H1 (cell line): ENCODE measurements at regions of chr17 and their contacts with region 1.

Region 1: DNA sequence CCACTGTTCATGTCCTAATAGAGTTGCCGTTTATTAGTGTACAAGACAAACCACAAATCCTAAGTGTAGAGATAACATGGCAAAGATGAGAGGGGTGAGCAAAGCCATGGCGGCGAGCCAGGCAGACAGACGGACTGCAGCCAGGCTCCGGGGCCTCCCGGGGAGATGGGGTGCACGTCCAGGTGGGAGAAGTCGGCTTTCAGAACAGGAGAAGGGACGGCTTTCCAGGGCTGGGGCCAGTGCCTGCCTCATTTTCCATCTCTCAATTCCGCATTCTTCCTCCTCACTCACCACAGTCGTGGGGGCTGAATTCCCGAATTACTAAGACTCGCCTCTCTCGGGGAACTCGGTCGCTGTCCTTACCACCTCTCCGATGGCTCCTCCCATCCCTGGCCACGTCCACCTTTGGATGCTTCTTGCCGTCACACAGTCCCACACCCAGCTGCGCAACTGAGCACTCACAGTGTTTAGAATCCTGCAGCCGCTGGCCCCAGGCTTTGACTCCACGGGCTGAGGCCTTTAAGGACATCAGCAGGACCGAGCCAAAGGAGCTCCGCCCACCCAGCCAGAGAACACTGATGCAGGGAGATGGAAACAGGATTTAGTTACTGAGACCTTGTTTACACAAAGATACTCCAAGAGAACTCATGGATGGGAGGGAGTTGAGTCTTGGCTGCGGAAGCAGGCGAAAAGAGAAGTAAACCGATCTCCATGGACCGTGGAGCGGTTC is 59.7 kb downstream of the RNF112 start:
- DNase-seq: peak in 1 of 2 experiments; percentile 63
- H3K4me3 ChIP-seq: no peak overlapping the region
- H3K27ac ChIP-seq: no peak overlapping the region
- H3K4me1 ChIP-seq: peaks cover 1 to 10% (median 6%) of the 10 kb centered on the region in 4 experiments; a peak in 6 of 7 replicates
- H3K27me3 ChIP-seq: no peaks in the 10 kb centered on the region
- CTCF ChIP-seq: no peak
- EP300 ChIP-seq: no peak
- POLR2A ChIP-seq: no peak
- RAD21 ChIP-seq: no peak

Region 2: GRCh38 chr17:19415311-19415710 is 55.4 kb before region 1 on chr17:
- CTCF ChIA-PET with region 1: no interaction called
- POLR2A ChIA-PET with region 1: no interaction called
- DNase-seq: no peak
- H3K4me3 ChIP-seq: no peak overlapping the region
- H3K27ac ChIP-seq: no peak overlapping the region
- H3K4me1 ChIP-seq: peaks cover 0 to 10% (median 6%) of the 10 kb centered on the region in 4 experiments; a peak in 4 of 7 replicates
- H3K27me3 ChIP-seq: peaks cover 0 to 6% (median under 1%) of the 10 kb centered on the region in 4 experiments; a peak in 2 of 7 replicates
- CTCF ChIP-seq: peak in 1 of 3 experiments; percentile 0; a peak in 1 of 4 replicates
- EP300 ChIP-seq: no peak
- POLR2A ChIP-seq: no peak
- RAD21 ChIP-seq: no peak

Region 3: DNA sequence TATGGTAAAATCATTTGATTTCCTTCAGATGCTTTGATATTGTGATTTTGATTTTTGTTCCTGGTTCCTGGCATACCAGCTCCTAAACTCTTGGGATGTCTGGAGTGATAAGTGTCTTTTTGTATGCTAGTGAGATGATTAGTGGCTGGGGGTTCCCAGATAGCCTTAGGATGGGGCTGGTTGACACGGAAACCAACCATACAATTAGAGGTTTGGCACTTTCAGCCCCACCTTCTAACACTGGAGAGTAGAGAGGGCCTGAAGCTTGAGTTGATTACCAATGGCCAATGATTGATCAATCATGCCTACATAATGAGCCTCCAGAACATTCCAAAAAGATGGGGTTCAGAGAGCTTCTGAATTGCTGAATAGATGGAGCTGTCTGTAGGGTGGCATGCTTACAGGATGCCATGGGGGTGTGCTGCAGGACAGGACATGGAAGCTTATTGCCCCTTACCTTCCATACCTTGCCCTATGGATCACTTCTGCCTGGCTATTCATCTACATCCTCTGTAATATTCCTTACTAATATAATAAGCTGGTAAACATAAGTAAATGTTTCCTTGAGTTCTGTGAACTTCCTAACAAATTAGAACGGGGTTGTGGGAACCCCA is 36.9 kb before region 1 on chr17:
- CTCF ChIA-PET with region 1: interaction called, 12 read pairs
- POLR2A ChIA-PET with region 1: interaction called, 3 read pairs
- DNase-seq: no peak
- H3K4me3 ChIP-seq: peak overlapping the region in 1 of 4 experiments; percentile 31; a peak in 2 of 8 replicates
- H3K27ac ChIP-seq: no peak overlapping the region
- H3K4me1 ChIP-seq: peaks cover 5 to 16% (median 11%) of the 10 kb centered on the region in 4 experiments
- H3K27me3 ChIP-seq: no peaks in the 10 kb centered on the region
- CTCF ChIP-seq: peak; percentile 56 to 66 (median 58)
- EP300 ChIP-seq: no peak
- POLR2A ChIP-seq: no peak
- RAD21 ChIP-seq: peak; percentile 79 to 83

Region 4: GRCh38 chr17:19482576-19482975 is 11.9 kb after region 1 on chr17:
- CTCF ChIA-PET with region 1: interaction called, 11 read pairs
- POLR2A ChIA-PET with region 1: interaction called, 3 read pairs
- DNase-seq: no peak
- H3K4me3 ChIP-seq: peak overlapping the region in 1 of 4 experiments; percentile 16; a peak in 1 of 8 replicates
- H3K27ac ChIP-seq: no peak overlapping the region
- H3K4me1 ChIP-seq: peaks cover 0 to 10% (median 5%) of the 10 kb centered on the region in 4 experiments; a peak in 5 of 7 replicates
- H3K27me3 ChIP-seq: no peaks in the 10 kb centered on the region
- CTCF ChIP-seq: no peak
- EP300 ChIP-seq: peak in 1 of 2 experiments; percentile 8; a peak in 1 of 3 replicates
- POLR2A ChIP-seq: no peak
- RAD21 ChIP-seq: no peak

Region 5: GRCh38 chr17:19523690-19524089 is 53.0 kb after region 1 on chr17:
- CTCF ChIA-PET with region 1: no interaction called
- POLR2A ChIA-PET with region 1: no interaction called
- DNase-seq: no peak
- H3K4me3 ChIP-seq: no peak overlapping the region
- H3K27ac ChIP-seq: no peak overlapping the region
- H3K4me1 ChIP-seq: no peaks in the 10 kb centered on the region
- H3K27me3 ChIP-seq: no peaks in the 10 kb centered on the region
- CTCF ChIP-seq: no peak
- EP300 ChIP-seq: no peak
- POLR2A ChIP-seq: no peak
- RAD21 ChIP-seq: no peak